Activated CD4-positive, alpha-beta memory T cell treated with anti-CD3 and anti-CD28 coated beads for 36 hours (primary cell): ENCODE measurements at regions of chr17 and their contacts with region 1.

Region 1: GRCh38 chr17:32491371-32492263 is 4.8 kb downstream of the CDK5R1 start:
- DNase-seq: peak; percentile 69
- H3K4me3 Mint-ChIP-seq: peak overlapping the region; percentile 87
- H3K27ac Mint-ChIP-seq: peak overlapping the region; percentile 78
- H3K4me1 Mint-ChIP-seq: peaks cover 66% of the 10 kb centered on the region
- H3K27me3 Mint-ChIP-seq: no peaks in the 10 kb centered on the region

Region 2: DNA sequence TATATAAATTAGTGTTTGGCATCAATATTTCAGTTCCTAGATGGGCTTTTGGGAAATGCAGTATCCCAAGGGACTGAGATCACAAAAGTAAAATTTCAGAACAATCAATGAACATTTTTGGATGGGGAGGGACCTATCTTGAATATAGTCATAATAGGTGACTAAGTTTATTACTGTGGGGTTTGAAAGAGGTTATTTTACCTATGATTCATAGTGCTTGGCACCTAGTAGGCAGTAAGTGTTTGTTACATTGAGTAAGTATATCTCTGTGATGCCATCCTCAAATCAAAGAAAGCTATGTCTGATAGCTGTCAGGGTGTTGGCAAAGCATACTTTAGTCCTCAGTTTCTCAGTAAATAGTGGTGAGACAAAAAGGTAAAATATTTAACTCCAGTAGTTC is 104.8 kb before region 1 on chr17:
- CTCF ChIA-PET with region 1: no interaction called
- POLR2A ChIA-PET with region 1: no interaction called
- intact Hi-C with region 1: no loop called
- DNase-seq: no peak
- H3K4me3 Mint-ChIP-seq: no peak overlapping the region
- H3K27ac Mint-ChIP-seq: no peak overlapping the region
- H3K4me1 Mint-ChIP-seq: peaks cover 4% of the 10 kb centered on the region
- H3K27me3 Mint-ChIP-seq: no peaks in the 10 kb centered on the region

Region 3: DNA sequence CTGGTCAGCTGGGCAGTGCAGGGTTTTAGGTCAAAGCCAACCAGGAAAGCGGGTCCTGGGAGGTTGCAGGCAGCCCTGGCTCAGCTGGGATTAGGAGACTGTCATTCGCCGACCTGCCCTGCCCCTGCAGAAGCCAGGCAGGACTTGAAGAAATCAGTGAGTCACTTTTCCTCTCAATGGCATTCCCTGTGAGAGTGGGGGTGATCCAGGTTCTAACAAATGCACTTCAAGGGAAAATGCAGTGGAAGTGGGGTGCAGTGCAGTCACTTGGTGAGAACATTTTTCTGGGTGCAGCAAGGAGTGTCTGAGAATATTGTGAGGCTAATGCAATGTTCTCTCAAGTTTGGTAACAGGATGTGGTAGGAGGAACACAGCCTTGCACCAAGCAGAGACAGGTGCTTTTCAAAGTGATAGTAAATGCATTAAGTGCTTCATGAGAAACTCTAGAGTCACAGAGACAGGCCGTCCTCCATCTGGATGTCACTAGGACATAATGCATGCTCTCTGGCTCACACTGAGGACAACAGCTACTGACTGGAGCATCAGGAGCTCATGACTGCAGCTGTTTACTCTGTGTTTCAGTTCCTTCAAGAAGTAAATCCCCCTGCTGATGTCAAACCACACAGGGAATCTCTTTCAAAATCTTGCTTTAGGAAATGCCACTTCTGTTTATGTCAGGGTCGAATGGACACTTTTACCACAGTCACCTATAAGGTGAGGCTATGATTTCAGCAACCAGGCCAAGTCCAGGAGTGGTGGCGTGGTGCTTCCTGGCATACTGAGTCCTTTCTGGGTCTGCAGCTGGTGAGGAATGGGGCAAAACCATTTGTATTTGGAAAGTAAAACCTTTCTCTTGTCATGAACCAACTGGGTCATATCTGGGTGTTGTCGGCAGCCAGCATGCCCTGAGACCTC is 11.9 kb after region 1 on chr17:
- CTCF ChIA-PET with region 1: interaction called, 9 read pairs
- POLR2A ChIA-PET with region 1: interaction called, 3 read pairs
- intact Hi-C with region 1: loop called (anchors 1 kb)
- DNase-seq: peak; percentile 67
- H3K4me3 Mint-ChIP-seq: peak overlapping the region; percentile 52
- H3K27ac Mint-ChIP-seq: peak overlapping the region; percentile 95
- H3K4me1 Mint-ChIP-seq: peaks cover 66% of the 10 kb centered on the region
- H3K27me3 Mint-ChIP-seq: no peaks in the 10 kb centered on the region

Region 4: GRCh38 chr17:32609085-32609484 is 117.5 kb after region 1 on chr17:
- CTCF ChIA-PET with region 1: interaction called, 4 read pairs
- POLR2A ChIA-PET with region 1: no interaction called
- intact Hi-C with region 1: loop called (anchors 1 kb)
- DNase-seq: peak; percentile 83
- H3K4me3 Mint-ChIP-seq: no peak overlapping the region
- H3K27ac Mint-ChIP-seq: no peak overlapping the region
- H3K4me1 Mint-ChIP-seq: peaks cover 7% of the 10 kb centered on the region
- H3K27me3 Mint-ChIP-seq: no peaks in the 10 kb centered on the region